Calu3 (cell line): ENCODE measurements at regions of chr5 and their contacts with region 1.

Region 1: GRCh38 chr5:141557681-141558136 is 61.1 kb downstream of the DIAPH1 start:
- DNase-seq: peak; percentile 91
- H3K4me3 Mint-ChIP-seq: peak overlapping the region; percentile 67
- H3K27ac Mint-ChIP-seq: peak overlapping the region; percentile 98
- H3K4me1 Mint-ChIP-seq: peaks cover 40% of the 10 kb centered on the region
- H3K27me3 Mint-ChIP-seq: no peaks in the 10 kb centered on the region
- CTCF ChIP-seq: peak; percentile 90

Region 2: DNA sequence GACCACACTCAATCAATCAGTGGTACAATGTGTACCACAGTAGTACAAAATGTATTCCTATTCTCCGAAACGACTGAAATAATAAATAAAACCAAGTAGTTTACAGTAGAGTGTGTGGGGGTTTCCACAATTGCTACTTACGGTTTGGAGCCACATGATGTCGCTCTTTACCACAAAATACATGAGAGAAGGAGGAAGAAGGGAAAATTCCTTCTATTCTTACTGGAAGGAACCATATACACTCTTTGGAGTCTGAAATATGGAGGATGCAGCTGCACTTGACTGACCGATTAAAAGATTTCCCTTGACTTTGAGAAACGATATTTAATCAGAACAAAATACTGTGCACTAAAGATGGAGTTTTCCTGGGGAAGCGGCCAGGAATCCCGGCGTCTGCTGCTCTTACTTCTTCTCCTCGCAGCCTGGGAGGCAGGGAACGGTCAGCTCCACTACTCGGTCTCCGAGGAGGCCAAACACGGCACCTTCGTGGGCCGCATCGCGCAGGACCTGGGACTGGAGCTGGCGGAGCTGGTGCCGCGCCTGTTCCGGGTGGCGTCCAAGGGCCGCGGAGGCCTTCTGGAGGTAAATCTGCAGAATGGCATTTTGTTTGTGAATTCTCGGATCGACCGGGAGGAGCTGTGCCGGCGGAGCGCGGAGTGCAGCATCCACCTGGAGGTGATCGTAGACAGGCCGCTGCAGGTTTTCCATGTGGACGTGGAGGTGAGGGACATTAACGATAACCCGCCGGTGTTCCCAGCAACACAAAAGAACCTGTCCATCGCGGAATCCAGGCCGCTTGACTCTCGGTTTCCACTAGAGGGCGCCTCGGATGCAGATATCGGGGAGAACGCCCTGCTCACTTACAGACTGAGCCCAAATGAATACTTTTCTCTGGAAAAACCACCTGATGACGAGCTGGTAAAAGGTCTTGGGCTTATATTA is 750.6 kb before region 1 on chr5 and contains the start of gene PCDHA4:
- CTCF ChIA-PET with region 1: no interaction called
- intact Hi-C with region 1: loop called (anchors 10 kb)
- DNase-seq: peak; percentile 69
- H3K4me3 Mint-ChIP-seq: peak within 1 kb of the TSS; percentile 68
- H3K27ac Mint-ChIP-seq: no peak within 1 kb of the TSS
- H3K4me1 Mint-ChIP-seq: no peaks in the 10 kb centered on the region
- H3K27me3 Mint-ChIP-seq: no peaks in the 10 kb centered on the region
- CTCF ChIP-seq: peak; percentile 49
- total RNA-seq, gene PCDHA4: 4.8 and 5.8 TPM in 2 replicates

Region 3: GRCh38 chr5:141320225-141321169 is 237.2 kb before region 1 on chr5 and contains the start of gene TAF7:
- CTCF ChIA-PET with region 1: interaction called, 8 read pairs
- intact Hi-C with region 1: loop called (anchors 2 kb)
- DNase-seq: peak; percentile 96
- H3K4me3 Mint-ChIP-seq: peak within 1 kb of the TSS; percentile 100
- H3K27ac Mint-ChIP-seq: peak within 1 kb of the TSS; percentile 100
- H3K4me1 Mint-ChIP-seq: peaks cover 8% of the 10 kb centered on the region
- H3K27me3 Mint-ChIP-seq: no peaks in the 10 kb centered on the region
- CTCF ChIP-seq: peak; percentile 86
- total RNA-seq, gene TAF7: 73.2 and 79.6 TPM in 2 replicates

Region 4: GRCh38 chr5:141402553-141403260 is 155.0 kb before region 1 on chr5 and contains the start of gene PCDHGA9:
- CTCF ChIA-PET with region 1: interaction called, 20 read pairs
- intact Hi-C with region 1: loop called (anchors 1 kb)
- DNase-seq: peak; percentile 73
- H3K4me3 Mint-ChIP-seq: peak within 1 kb of the TSS; percentile 95
- H3K27ac Mint-ChIP-seq: peak within 1 kb of the TSS; percentile 68
- H3K4me1 Mint-ChIP-seq: peaks cover 17% of the 10 kb centered on the region
- H3K27me3 Mint-ChIP-seq: no peaks in the 10 kb centered on the region
- CTCF ChIP-seq: peak; percentile 83
- total RNA-seq, gene PCDHGA9: 16.0 and 18.1 TPM in 2 replicates

Region 5: GRCh38 chr5:141475625-141476131 is 82.0 kb before region 1 on chr5 and contains the start of gene PCDHGC3:
- CTCF ChIA-PET with region 1: interaction called, 10 read pairs
- intact Hi-C with region 1: loop called (anchors 5 kb)
- DNase-seq: peak; percentile 95
- H3K4me3 Mint-ChIP-seq: peak within 1 kb of the TSS; percentile 91
- H3K27ac Mint-ChIP-seq: peak within 1 kb of the TSS; percentile 80
- H3K4me1 Mint-ChIP-seq: peaks cover 10% of the 10 kb centered on the region
- H3K27me3 Mint-ChIP-seq: no peaks in the 10 kb centered on the region
- CTCF ChIP-seq: no peak
- total RNA-seq, gene PCDHGC3: 49.4 and 73.0 TPM in 2 replicates